ENCODE measurements at regions of chr2 and their contacts with region 1.

Region 1: GRCh38 chr2:61176755-61177726 is 15.1 kb downstream of the C2orf74 start:
- DNase-seq: peak; percentile 95
- H3K4me3 Mint-ChIP-seq: peak overlapping the region; percentile 89
- H3K27ac Mint-ChIP-seq: peak overlapping the region; percentile 94
- H3K4me1 Mint-ChIP-seq: peaks cover 47% of the 10 kb centered on the region
- H3K27me3 Mint-ChIP-seq: no peaks in the 10 kb centered on the region

Region 2: GRCh38 chr2:60756191-60757041 is 420.6 kb before region 1 on chr2 and contains the start of gene PAPOLG:
- CTCF ChIA-PET with region 1: no interaction called
- POLR2A ChIA-PET with region 1: interaction called, 3 read pairs
- intact Hi-C with region 1: loop called (anchors 2 kb)
- DNase-seq: peak; percentile 98
- H3K4me3 Mint-ChIP-seq: peak within 1 kb of the TSS; percentile 99
- H3K27ac Mint-ChIP-seq: peak within 1 kb of the TSS; percentile 96
- H3K4me1 Mint-ChIP-seq: peaks cover 39% of the 10 kb centered on the region
- H3K27me3 Mint-ChIP-seq: no peaks in the 10 kb centered on the region
- total RNA-seq, gene PAPOLG: 14.4 to 15.7 TPM

Region 3: GRCh38 chr2:61065715-61066709 is 111.0 kb before region 1 on chr2 and contains the start of gene SANBR:
- CTCF ChIA-PET with region 1: no interaction called
- POLR2A ChIA-PET with region 1: interaction called, 4 read pairs
- intact Hi-C with region 1: loop called (anchors 1 kb)
- DNase-seq: peak; percentile 89
- H3K4me3 Mint-ChIP-seq: peak within 1 kb of the TSS; percentile 81
- H3K27ac Mint-ChIP-seq: no peak within 1 kb of the TSS
- H3K4me1 Mint-ChIP-seq: peaks cover 4% of the 10 kb centered on the region
- H3K27me3 Mint-ChIP-seq: no peaks in the 10 kb centered on the region
- total RNA-seq, gene SANBR: 5.3 to 5.9 TPM

Region 4: DNA sequence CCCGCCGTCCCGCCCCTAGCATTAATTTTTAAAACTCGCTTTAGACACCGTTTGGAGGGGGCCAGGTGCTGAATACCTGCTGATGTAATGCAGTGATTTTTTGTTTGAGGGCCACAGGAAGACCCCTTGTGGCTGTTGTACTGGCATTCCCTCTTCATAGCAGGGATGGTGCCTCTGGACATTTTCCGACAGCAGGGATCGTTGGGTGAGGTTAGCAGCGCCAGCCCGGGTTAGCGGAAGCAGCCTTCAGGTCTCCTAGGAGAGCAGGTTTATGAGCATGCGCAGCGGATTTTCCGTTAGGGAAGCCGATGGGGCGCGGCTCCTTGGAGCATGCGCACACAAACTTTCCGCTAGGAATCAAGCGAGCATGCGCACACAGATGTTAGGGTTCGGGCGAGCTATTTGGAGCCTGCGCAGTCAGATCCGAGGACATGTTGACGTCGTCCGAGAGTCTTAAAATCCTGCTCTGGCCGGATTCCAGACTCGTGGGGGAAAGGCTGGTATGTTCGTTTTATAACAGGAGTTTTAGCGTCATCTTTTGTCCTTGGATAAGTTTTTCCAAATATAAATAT is 32.3 kb before region 1 on chr2:
- CTCF ChIA-PET with region 1: interaction called, 5 read pairs
- POLR2A ChIA-PET with region 1: interaction called, 16 read pairs
- intact Hi-C with region 1: loop called (anchors 1 kb)
- DNase-seq: peak; percentile 96
- H3K4me3 Mint-ChIP-seq: peak overlapping the region; percentile 91
- H3K27ac Mint-ChIP-seq: peak overlapping the region; percentile 85
- H3K4me1 Mint-ChIP-seq: peaks cover 3% of the 10 kb centered on the region
- H3K27me3 Mint-ChIP-seq: peaks cover 1% of the 10 kb centered on the region

Region 5: DNA sequence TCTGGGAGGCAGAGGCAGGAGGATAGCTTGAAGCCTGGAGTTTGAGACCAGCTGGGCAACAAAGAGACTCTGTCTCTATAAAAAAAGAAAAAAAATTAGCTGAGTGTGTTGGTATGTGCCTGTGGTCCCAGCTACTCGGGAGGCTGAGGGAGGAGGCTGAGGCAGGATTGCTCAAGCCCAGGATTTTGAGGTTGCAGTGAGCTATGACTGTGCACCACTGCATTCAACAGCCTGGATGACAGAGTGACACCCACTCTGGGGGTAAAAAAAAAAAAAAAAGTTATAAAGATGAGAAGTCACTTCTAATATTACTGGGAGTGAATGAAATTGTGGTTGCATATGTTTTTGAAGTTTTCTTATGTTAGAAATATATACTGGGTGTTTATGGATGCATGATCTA is 56.5 kb after region 1 on chr2:
- CTCF ChIA-PET with region 1: no interaction called
- POLR2A ChIA-PET with region 1: no interaction called
- intact Hi-C with region 1: no loop called
- DNase-seq: peak; percentile 59
- H3K4me3 Mint-ChIP-seq: no peak overlapping the region
- H3K27ac Mint-ChIP-seq: no peak overlapping the region
- H3K4me1 Mint-ChIP-seq: peaks cover 9% of the 10 kb centered on the region
- H3K27me3 Mint-ChIP-seq: no peaks in the 10 kb centered on the region

Measured in activated CD4-positive, alpha-beta memory T cell treated with anti-CD3 and anti-CD28 coated beads for 36 hours (primary cell).